ENCODE measurements at regions of chr4 and their contacts with region 1.

Region 1: DNA sequence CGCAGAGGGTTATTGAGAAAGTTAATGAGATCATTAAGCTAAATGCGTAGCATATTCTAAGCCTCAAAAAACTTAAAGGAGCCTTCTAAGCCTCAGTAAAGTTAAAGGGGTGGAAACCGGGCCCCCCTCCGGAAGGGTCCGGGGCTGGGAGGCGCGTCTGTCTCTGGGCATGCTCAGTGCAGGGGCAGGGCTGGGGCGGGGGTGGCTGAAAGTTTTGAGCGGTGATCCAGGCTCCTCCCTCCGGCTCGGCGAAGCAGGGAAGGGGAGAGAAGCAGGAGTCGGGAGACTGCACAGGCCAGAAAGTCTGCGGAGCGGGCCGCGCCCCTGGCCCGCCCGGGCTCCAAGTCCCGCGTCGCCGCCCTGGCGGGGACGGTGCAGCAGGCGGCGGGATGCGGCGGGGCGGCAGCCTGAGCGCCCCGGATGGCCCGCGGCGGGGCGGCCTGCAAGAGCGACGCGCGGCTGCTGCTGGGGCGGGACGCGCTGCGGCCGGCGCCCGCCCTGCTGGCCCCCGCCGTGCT is at the start of gene EVC:
- DNase-seq: peak; percentile 54
- ATAC-seq: peak; percentile 86
- H3K4me3 ChIP-seq: peak within 1 kb of the TSS; percentile 58 to 74 (median 72); a peak in 5 of 6 replicates
- H3K27ac ChIP-seq: peak within 1 kb of the TSS; percentile 34
- H3K4me1 ChIP-seq: peaks cover 39% of the 10 kb centered on the region
- H3K27me3 ChIP-seq: no peaks in the 10 kb centered on the region
- CTCF ChIP-seq: no peak
- EP300 ChIP-seq: no peak
- POLR2A ChIP-seq: peak; percentile 49 to 67; a peak in 3 of 4 replicates
- RAD21 ChIP-seq: no peak
- total RNA-seq, gene EVC: 2.8 and 4.9 TPM in 2 replicates

Region 2: GRCh38 chr4:5722328-5722727 is 11.3 kb after region 1 on chr4:
- CTCF ChIA-PET with region 1: no interaction called
- POLR2A ChIA-PET with region 1: interaction called, 11 read pairs
- in situ Hi-C with region 1: no loop called
- intact Hi-C with region 1: no loop called
- DNase-seq: peak; percentile 86
- ATAC-seq: peak; percentile 96
- H3K4me3 ChIP-seq: peak overlapping the region in 1 of 3 experiments; percentile 26; a peak in 1 of 6 replicates
- H3K27ac ChIP-seq: peak overlapping the region; percentile 67
- H3K4me1 ChIP-seq: peaks cover 73% of the 10 kb centered on the region
- H3K27me3 ChIP-seq: no peaks in the 10 kb centered on the region
- CTCF ChIP-seq: no peak
- EP300 ChIP-seq: no peak; a peak in 1 of 4 replicates
- POLR2A ChIP-seq: no peak
- RAD21 ChIP-seq: no peak

Region 3: GRCh38 chr4:5791654-5792053 is 80.6 kb after region 1 on chr4:
- CTCF ChIA-PET with region 1: no interaction called
- POLR2A ChIA-PET with region 1: no interaction called
- in situ Hi-C with region 1: no loop called
- intact Hi-C with region 1: loop called (anchors 1 kb)
- DNase-seq: no peak
- ATAC-seq: no peak
- H3K4me3 ChIP-seq: no peak overlapping the region
- H3K27ac ChIP-seq: no peak overlapping the region
- H3K4me1 ChIP-seq: no peaks in the 10 kb centered on the region
- H3K27me3 ChIP-seq: no peaks in the 10 kb centered on the region; a peak in 1 of 5 replicates
- CTCF ChIP-seq: no peak
- EP300 ChIP-seq: no peak
- POLR2A ChIP-seq: no peak
- RAD21 ChIP-seq: no peak

Region 4: DNA sequence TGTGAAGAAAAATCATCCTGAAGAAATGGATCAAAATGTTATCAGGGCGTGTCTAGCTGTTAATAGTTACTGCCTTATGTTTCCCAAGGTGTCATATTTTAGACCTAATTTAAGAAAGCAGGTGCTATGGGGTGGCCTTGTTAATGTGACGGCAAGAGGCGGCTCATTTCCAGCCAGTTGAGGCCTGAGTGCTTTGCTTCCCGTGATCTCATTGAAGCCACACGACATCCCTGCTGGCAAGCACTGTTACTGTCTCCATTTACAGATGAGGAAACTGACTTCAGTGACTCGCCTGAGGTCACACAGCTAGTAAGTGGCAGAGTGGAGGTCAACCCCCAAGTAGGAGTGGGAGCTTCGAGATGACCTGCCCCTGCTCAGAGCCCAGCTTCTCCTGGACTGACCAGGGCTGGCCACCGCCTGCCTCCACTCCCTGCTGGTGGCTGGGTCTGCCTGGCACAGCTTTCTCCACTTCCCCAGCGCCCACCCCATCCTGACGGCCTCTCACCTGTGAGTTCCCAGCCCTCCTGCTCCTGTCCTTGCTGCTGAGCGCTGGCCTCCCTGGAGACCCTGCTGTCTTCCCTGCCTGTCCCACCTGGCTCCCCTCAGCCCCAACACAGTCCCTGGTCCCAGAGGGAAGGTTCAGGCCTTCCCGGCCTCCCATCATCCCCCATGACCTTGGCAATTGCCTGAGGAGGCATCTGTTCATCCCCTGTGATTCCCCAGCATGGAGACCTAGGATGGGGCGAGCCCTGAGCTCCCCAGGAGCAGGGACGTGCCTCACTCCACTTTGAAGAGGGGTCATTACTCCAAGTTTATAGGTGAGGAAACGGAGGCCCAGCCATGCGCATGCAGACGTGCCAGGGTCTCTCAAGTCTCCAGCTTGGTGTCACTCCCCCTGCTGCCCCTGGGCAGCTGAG is 1433.6 kb after region 1 on chr4:
- CTCF ChIA-PET with region 1: no interaction called
- POLR2A ChIA-PET with region 1: no interaction called
- in situ Hi-C with region 1: no loop called
- intact Hi-C with region 1: no loop called
- DNase-seq: no peak
- ATAC-seq: no peak
- H3K4me3 ChIP-seq: no peak overlapping the region
- H3K27ac ChIP-seq: no peak overlapping the region
- H3K4me1 ChIP-seq: peaks cover 14% of the 10 kb centered on the region
- H3K27me3 ChIP-seq: peaks cover 5 to 51% of the 10 kb centered on the region in 2 experiments
- CTCF ChIP-seq: no peak
- EP300 ChIP-seq: no peak
- POLR2A ChIP-seq: no peak
- RAD21 ChIP-seq: no peak